Activated CD4-positive, alpha-beta memory T cell treated with anti-CD3 and anti-CD28 coated beads for 36 hours (primary cell): ENCODE measurements at regions of chr1 and their contacts with region 1.

Region 1: GRCh38 chr1:29235955-29236684 is at the start of gene PTPRU:
- DNase-seq: peak; percentile 86
- H3K4me3 Mint-ChIP-seq: peak within 1 kb of the TSS; percentile 60
- H3K27ac Mint-ChIP-seq: no peak within 1 kb of the TSS
- H3K4me1 Mint-ChIP-seq: peaks cover 17% of the 10 kb centered on the region
- H3K27me3 Mint-ChIP-seq: peaks cover 46% of the 10 kb centered on the region
- total RNA-seq, gene PTPRU: 0.17 to 0.85 TPM

Region 2: GRCh38 chr1:29851691-29852090 is 615.6 kb after region 1 on chr1:
- CTCF ChIA-PET with region 1: interaction called, 3 read pairs
- POLR2A ChIA-PET with region 1: no interaction called
- intact Hi-C with region 1: loop called (anchors 5 kb)
- DNase-seq: no peak
- H3K4me3 Mint-ChIP-seq: no peak overlapping the region
- H3K27ac Mint-ChIP-seq: no peak overlapping the region
- H3K4me1 Mint-ChIP-seq: no peaks in the 10 kb centered on the region
- H3K27me3 Mint-ChIP-seq: peaks cover 10% of the 10 kb centered on the region

Region 3: DNA sequence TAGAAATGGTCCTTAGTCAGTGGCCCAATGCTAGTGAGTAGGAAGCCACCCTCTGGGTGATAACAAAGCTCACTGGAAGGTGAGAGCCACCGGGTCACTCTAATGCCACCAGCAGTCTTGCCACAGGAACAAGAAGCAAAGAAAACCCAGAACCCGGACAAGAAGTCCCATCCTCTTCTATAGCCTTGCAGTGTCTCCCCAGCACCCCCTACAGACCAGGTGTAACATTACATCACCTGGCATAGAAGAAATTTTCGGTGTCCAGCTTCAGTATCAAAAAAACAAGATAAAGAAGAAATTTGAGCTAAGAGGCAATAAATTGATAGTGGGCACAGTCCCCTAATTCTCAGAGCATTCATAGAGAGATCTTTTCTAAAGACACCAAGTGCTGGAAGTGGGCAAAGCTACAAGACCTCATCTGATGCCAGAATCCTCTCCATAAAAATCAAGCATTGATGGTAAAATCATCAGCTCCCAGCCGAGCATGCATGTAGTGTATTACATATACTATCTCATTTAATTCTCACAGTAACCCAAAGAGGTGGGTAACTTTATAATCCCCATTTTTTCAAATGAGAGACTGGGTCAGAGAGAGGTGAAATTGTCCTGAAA is 996.3 kb after region 1 on chr1:
- CTCF ChIA-PET with region 1: no interaction called
- POLR2A ChIA-PET with region 1: no interaction called
- intact Hi-C with region 1: loop called (anchors 5 kb)
- DNase-seq: peak; percentile 29
- H3K4me3 Mint-ChIP-seq: no peak overlapping the region
- H3K27ac Mint-ChIP-seq: no peak overlapping the region
- H3K4me1 Mint-ChIP-seq: no peaks in the 10 kb centered on the region
- H3K27me3 Mint-ChIP-seq: peaks cover 2% of the 10 kb centered on the region

Region 4: DNA sequence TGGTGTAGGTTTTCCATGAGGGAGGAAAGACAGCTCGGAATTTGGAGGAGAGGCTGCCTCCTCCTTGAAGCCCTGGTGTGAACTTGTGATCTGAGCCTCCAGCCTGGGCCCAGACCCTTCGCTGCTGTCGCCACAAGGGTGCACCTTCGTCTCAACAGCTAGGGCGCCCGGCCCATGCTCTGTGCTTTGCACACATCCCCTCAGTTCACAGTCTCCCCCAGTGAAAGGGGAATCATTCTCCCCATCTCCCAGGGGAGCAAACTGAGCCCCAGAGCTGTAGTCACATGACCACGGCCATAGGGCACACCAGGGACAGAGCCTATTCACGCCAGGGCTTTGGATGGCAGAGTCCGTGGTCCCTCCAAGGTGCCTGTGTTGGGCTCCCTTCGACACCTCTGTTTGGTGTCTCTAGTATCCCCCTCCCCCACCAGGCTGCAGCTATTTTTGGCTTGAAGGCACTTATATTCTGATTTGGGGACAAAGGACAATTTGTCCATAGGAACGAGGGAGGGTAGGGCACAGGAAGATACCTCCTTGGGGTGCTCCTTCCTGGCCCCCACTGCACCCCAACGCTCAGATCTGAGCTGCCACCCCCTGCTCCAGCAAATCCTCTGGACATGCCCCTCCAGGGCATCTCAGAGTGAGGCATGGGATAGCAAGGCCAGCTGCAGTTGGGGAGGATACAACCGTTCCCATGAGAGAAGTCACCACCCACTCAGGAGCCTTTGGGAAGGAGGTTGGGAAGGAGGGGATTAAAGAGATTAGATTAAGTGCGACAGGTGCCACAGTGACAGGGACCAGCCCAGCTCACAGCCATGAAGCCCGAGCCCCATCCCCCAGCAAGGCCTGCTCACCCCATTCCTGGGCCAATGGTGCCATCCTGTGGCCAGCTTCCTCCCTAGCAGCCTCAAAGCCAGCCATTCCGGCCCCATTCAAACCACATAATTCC is 1471.6 kb after region 1 on chr1:
- CTCF ChIA-PET with region 1: no interaction called
- POLR2A ChIA-PET with region 1: interaction called, 4 read pairs
- intact Hi-C with region 1: loop called (anchors 2 kb)
- DNase-seq: peak; percentile 78
- H3K4me3 Mint-ChIP-seq: no peak overlapping the region
- H3K27ac Mint-ChIP-seq: no peak overlapping the region
- H3K4me1 Mint-ChIP-seq: no peaks in the 10 kb centered on the region
- H3K27me3 Mint-ChIP-seq: peaks cover 6% of the 10 kb centered on the region